ENCODE measurements at regions of chr6 and their contacts with region 1.

Region 1: GRCh38 chr6:73610444-73611275 is 43.1 kb downstream of the SLC17A5 start:
- DNase-seq: no peak
- ATAC-seq: peak; percentile 66
- H3K4me3 Mint-ChIP-seq: no peak overlapping the region
- H3K27ac Mint-ChIP-seq: no peak overlapping the region
- H3K4me1 Mint-ChIP-seq: peaks cover 4% of the 10 kb centered on the region
- H3K27me3 Mint-ChIP-seq: no peaks in the 10 kb centered on the region
- CTCF ChIP-seq: peak; percentile 73

Region 2: GRCh38 chr6:73491377-73491776 is 119.3 kb before region 1 on chr6:
- CTCF ChIA-PET with region 1: interaction called, 10 read pairs
- POLR2A ChIA-PET with region 1: no interaction called
- intact Hi-C with region 1: no loop called
- DNase-seq: no peak
- ATAC-seq: no peak
- H3K4me3 Mint-ChIP-seq: no peak overlapping the region
- H3K27ac Mint-ChIP-seq: peak overlapping the region; percentile 22
- H3K4me1 Mint-ChIP-seq: peaks cover 2% of the 10 kb centered on the region
- H3K27me3 Mint-ChIP-seq: no peaks in the 10 kb centered on the region
- CTCF ChIP-seq: no peak

Region 3: DNA sequence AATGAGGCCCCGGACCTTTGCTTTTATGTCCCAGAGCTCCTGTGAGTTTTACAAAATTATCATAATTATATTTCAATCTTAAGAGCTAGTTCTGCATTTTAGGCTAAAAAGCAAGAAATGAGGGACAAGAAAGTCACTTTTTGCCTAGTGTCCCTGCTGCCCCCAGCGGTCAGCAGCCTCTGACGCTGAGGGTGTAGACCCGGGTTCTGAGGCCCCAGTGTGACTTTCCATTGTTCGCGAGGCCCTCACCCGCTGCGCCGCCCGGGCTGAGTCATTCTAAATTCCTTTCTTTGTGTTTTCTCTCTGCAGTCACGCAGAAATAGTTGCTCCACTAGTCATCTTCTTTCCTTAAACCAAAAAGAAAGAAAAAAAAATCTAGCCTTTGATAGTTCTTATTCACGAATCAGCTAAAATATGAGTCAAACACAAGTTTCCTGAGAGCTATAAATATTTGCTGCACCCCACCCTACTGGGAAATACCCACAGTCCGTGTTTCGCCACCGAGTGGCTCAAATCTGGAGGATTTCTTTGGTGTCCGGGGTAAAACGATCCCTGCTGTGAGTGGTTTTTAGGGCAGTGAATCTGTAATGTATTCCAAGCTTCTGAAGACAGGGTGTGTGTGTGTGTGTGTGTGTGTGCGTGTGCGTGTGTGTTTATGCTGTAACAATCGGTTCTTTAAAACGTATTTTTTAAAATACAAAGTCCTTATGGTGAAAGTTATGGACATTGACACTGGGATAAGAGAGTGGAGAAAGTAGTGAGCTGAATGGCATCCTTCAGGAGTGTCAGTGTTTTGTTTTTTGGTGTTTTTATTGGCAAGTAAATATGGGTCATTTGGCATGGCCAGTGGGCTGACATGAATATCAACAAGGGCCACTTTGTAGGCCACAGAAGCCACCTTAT is 30.2 kb before region 1 on chr6:
- CTCF ChIA-PET with region 1: interaction called, 14 read pairs
- POLR2A ChIA-PET with region 1: interaction called, 9 read pairs
- intact Hi-C with region 1: no loop called
- DNase-seq: peak; percentile 89
- ATAC-seq: peak; percentile 90
- H3K4me3 Mint-ChIP-seq: peak overlapping the region; percentile 69
- H3K27ac Mint-ChIP-seq: peak overlapping the region; percentile 99
- H3K4me1 Mint-ChIP-seq: peaks cover 28% of the 10 kb centered on the region
- H3K27me3 Mint-ChIP-seq: no peaks in the 10 kb centered on the region
- CTCF ChIP-seq: no peak

Region 4: GRCh38 chr6:73624896-73625295 is 14.2 kb after region 1 on chr6:
- CTCF ChIA-PET with region 1: interaction called, 11 read pairs
- POLR2A ChIA-PET with region 1: interaction called, 3 read pairs
- intact Hi-C with region 1: no loop called
- DNase-seq: no peak
- ATAC-seq: no peak
- H3K4me3 Mint-ChIP-seq: no peak overlapping the region
- H3K27ac Mint-ChIP-seq: no peak overlapping the region
- H3K4me1 Mint-ChIP-seq: peaks cover 6% of the 10 kb centered on the region
- H3K27me3 Mint-ChIP-seq: no peaks in the 10 kb centered on the region
- CTCF ChIP-seq: no peak

Region 5: DNA sequence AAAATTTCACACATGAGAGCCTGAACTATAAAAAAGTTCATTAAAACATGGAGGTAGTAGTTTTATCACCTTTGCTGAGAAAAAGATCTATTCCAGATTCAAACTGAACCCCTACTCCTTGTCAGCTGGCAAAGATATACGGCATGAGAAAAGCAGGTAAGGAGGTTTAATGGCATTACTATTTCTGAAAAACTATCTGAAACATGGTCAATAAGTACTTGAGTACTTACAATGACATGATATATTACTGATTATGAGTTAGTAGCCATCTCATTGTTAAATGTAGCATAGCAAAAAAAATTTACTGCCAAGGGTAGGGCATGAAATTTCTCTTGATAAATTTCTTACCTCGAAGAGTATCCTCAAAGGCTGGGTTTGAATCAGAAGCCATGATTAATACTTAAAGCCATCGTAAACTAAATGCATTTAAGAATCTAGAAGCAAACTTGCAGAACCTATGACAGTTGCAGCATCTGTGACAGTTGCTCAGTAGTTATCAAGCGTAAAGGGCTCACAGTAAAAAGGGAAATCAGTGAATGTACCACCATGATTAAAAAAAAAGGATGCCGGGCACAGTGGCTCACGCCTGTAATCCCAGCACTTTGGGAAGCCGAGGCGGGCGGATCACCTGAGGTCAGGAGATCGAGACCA is 34.4 kb after region 1 on chr6:
- CTCF ChIA-PET with region 1: interaction called, 10 read pairs
- POLR2A ChIA-PET with region 1: no interaction called
- intact Hi-C with region 1: no loop called
- DNase-seq: no peak
- ATAC-seq: peak; percentile 27
- H3K4me3 Mint-ChIP-seq: peak overlapping the region; percentile 84
- H3K27ac Mint-ChIP-seq: peak overlapping the region; percentile 57
- H3K4me1 Mint-ChIP-seq: peaks cover 9% of the 10 kb centered on the region
- H3K27me3 Mint-ChIP-seq: no peaks in the 10 kb centered on the region
- CTCF ChIP-seq: no peak

Region 6: DNA sequence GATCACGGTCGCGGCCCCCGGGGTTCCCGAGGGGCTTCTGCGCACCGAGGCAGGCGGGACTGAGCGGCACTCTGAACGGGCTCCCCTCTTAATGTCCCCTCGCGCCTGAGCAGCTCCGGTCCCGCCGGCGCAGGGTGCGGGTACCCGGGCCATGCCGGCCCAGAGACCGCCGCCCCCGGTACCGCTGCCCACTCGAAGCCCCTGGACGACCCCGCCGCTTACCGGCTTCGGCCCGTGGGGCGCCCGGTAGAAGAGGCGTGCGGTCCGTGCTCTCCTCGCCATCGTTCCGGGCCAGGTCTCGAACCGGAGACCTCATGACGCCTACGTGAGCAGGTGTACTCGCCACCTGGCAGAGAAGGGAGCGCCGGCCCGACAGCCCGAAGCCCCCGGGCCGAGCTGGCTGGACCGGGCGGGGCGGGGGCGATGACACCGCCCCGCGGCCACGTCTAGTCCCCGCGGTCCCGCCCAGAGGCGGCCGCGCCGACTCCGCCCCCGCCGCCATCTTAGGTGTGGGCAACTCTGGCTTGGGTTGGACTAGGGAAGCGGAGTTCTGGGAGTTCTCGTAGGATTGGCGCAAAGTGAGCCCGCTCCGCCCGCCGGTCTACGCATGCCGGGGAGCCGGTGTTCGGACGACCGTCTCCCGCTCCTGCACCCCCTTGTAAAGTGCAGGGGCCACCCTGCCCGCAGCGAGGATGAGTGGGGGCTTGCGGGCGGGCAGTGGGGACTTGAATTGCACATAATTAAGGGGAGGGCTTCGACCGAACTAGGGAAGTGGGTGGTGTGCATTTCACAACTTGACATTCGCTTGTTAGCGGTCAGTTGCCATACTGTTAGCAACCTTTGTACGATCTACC is 43.1 kb after region 1 on chr6 and contains the start of gene SLC17A5:
- CTCF ChIA-PET with region 1: interaction called, 13 read pairs
- POLR2A ChIA-PET with region 1: interaction called, 4 read pairs
- intact Hi-C with region 1: no loop called
- DNase-seq: peak; percentile 92
- ATAC-seq: peak; percentile 89
- H3K4me3 Mint-ChIP-seq: peak within 1 kb of the TSS; percentile 87
- H3K27ac Mint-ChIP-seq: peak within 1 kb of the TSS; percentile 92
- H3K4me1 Mint-ChIP-seq: peaks cover 31% of the 10 kb centered on the region
- H3K27me3 Mint-ChIP-seq: no peaks in the 10 kb centered on the region
- CTCF ChIP-seq: no peak
- total RNA-seq, gene SLC17A5: 4.2 to 5.0 TPM

Measured in activated CD8-positive, alpha-beta T cell treated with anti-CD3 and anti-CD28 coated beads for 36 hours (primary cell).